Caco-2 (cell line): ENCODE measurements at regions of chr20 and their contacts with region 1.

Region 1: DNA sequence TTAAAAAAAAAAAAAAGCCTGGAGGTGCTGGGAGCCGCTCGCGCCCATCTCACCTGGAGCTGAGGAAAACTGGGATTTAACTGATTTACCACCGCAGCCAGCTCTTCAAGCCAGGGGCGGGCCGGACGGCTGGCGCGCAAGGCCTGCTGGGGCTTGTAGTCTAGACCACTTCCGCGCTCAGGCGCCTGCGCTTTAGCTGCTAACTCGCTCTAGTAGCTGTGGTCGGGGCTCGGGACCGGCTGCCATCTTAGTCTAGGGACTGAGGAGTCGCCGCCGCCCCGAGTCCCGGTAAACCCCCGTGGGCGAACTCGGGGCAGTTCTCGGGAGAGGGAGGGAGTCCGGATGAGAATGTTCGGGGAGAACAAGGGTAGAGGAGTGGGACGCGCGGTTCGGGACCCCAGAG is at the start of gene ITCH:
- DNase-seq: peak; percentile 99
- H3K4me3 ChIP-seq: peak within 1 kb of the TSS; percentile 93
- H3K4me3 Mint-ChIP-seq: peak within 1 kb of the TSS; percentile 81
- H3K27ac Mint-ChIP-seq: peak within 1 kb of the TSS; percentile 96
- H3K4me1 ChIP-seq: peaks cover 26% of the 10 kb centered on the region
- H3K4me1 Mint-ChIP-seq: peaks cover 23% of the 10 kb centered on the region
- H3K27me3 ChIP-seq: no peaks in the 10 kb centered on the region
- H3K27me3 Mint-ChIP-seq: no peaks in the 10 kb centered on the region
- CTCF ChIP-seq: no peak
- total RNA-seq, gene ITCH: 135 and 138 TPM in 2 replicates

Region 2: GRCh38 chr20:34282041-34282440 is 81.0 kb before region 1 on chr20:
- CTCF ChIA-PET with region 1: no interaction called
- POLR2A ChIA-PET with region 1: interaction called, 15 read pairs
- intact Hi-C with region 1: no loop called
- DNase-seq: no peak
- H3K4me3 ChIP-seq: no peak overlapping the region
- H3K4me3 Mint-ChIP-seq: no peak overlapping the region
- H3K27ac Mint-ChIP-seq: no peak overlapping the region
- H3K4me1 ChIP-seq: no peaks in the 10 kb centered on the region
- H3K4me1 Mint-ChIP-seq: no peaks in the 10 kb centered on the region
- H3K27me3 ChIP-seq: no peaks in the 10 kb centered on the region
- H3K27me3 Mint-ChIP-seq: no peaks in the 10 kb centered on the region
- CTCF ChIP-seq: no peak

Region 3: GRCh38 chr20:34334654-34335407 is 28.2 kb before region 1 on chr20:
- CTCF ChIA-PET with region 1: no interaction called
- POLR2A ChIA-PET with region 1: interaction called, 15 read pairs
- intact Hi-C with region 1: no loop called
- DNase-seq: no peak
- H3K4me3 ChIP-seq: no peak overlapping the region
- H3K4me3 Mint-ChIP-seq: no peak overlapping the region
- H3K27ac Mint-ChIP-seq: peak overlapping the region; percentile 56
- H3K4me1 ChIP-seq: peaks cover 19% of the 10 kb centered on the region
- H3K4me1 Mint-ChIP-seq: peaks cover 25% of the 10 kb centered on the region
- H3K27me3 ChIP-seq: no peaks in the 10 kb centered on the region
- H3K27me3 Mint-ChIP-seq: no peaks in the 10 kb centered on the region
- CTCF ChIP-seq: no peak

Region 4: DNA sequence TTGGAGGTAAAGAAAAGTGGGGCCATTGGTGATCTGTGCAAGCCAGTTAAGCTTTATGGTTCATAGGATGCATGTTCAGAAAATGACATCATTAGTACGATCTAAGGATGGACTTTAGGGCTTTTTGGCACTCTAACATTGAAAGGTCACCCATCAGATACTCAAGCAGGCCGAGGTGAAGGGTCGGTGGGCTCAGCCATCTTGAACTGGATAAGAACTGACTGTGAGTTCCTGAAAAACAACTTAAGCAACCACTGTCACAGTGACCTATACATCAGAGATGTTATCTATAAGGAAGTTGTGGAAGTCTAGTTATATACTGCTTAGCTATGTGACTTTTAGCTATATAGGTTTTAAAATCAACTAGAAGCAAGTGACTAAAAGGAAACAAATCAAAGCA is 13.0 kb before region 1 on chr20:
- CTCF ChIA-PET with region 1: interaction called, 11 read pairs
- POLR2A ChIA-PET with region 1: interaction called, 10 read pairs
- intact Hi-C with region 1: no loop called
- DNase-seq: no peak
- H3K4me3 ChIP-seq: no peak overlapping the region
- H3K4me3 Mint-ChIP-seq: no peak overlapping the region
- H3K27ac Mint-ChIP-seq: no peak overlapping the region
- H3K4me1 ChIP-seq: peaks cover 19% of the 10 kb centered on the region
- H3K4me1 Mint-ChIP-seq: peaks cover 11% of the 10 kb centered on the region
- H3K27me3 ChIP-seq: no peaks in the 10 kb centered on the region
- H3K27me3 Mint-ChIP-seq: no peaks in the 10 kb centered on the region
- CTCF ChIP-seq: no peak

Region 5: DNA sequence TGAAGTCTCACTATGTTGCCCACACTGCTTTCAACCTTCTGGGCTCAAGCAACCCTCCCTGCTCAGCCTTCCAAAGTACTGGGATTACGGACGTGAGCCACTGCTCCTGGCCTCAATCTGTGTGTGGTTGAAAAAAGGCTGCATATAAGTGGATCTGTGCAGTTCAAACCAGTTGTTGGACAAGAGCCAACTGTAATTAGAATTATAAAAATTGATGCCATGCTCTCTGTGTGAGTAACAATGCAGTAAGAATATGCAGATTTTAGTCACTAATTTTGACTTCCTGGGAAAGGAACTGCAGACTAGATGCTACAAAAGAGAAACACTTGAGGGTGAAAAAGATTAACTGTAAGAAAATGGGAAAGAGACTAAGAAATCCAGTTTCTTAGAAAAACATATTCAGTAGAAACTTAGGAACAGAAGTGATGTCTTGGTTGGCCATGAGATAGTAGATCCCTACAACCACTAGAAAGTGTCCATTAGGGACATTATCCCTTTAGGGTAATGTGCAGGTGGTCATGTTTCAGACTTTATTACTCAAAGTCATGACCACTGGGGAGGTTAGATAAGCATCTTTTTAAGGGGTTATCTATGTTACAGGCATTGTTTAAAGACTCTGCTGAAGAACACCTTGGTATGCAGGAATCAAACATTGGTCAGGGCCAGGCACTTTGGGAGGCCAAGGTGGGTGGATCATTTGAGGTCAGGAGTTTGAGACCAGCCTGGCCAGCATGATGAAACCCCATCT is 26.3 kb after region 1 on chr20:
- CTCF ChIA-PET with region 1: no interaction called
- POLR2A ChIA-PET with region 1: interaction called, 24 read pairs
- intact Hi-C with region 1: no loop called
- DNase-seq: peak; percentile 36 to 67
- H3K4me3 ChIP-seq: no peak overlapping the region
- H3K4me3 Mint-ChIP-seq: no peak overlapping the region
- H3K27ac Mint-ChIP-seq: peak overlapping the region; percentile 43
- H3K4me1 ChIP-seq: peaks cover 49% of the 10 kb centered on the region
- H3K4me1 Mint-ChIP-seq: peaks cover 47% of the 10 kb centered on the region
- H3K27me3 ChIP-seq: no peaks in the 10 kb centered on the region
- H3K27me3 Mint-ChIP-seq: no peaks in the 10 kb centered on the region
- CTCF ChIP-seq: no peak

Region 6: GRCh38 chr20:34522969-34523871 is 160.2 kb after region 1 on chr20:
- CTCF ChIA-PET with region 1: interaction called, 17 read pairs
- POLR2A ChIA-PET with region 1: interaction called, 4 read pairs
- intact Hi-C with region 1: no loop called
- DNase-seq: peak; percentile 89 to 93
- H3K4me3 ChIP-seq: no peak overlapping the region
- H3K4me3 Mint-ChIP-seq: no peak overlapping the region
- H3K27ac Mint-ChIP-seq: peak overlapping the region; percentile 25
- H3K4me1 ChIP-seq: peaks cover 46% of the 10 kb centered on the region
- H3K4me1 Mint-ChIP-seq: peaks cover 50% of the 10 kb centered on the region
- H3K27me3 ChIP-seq: no peaks in the 10 kb centered on the region
- H3K27me3 Mint-ChIP-seq: no peaks in the 10 kb centered on the region
- CTCF ChIP-seq: peak; percentile 96 to 99

Region 7: DNA sequence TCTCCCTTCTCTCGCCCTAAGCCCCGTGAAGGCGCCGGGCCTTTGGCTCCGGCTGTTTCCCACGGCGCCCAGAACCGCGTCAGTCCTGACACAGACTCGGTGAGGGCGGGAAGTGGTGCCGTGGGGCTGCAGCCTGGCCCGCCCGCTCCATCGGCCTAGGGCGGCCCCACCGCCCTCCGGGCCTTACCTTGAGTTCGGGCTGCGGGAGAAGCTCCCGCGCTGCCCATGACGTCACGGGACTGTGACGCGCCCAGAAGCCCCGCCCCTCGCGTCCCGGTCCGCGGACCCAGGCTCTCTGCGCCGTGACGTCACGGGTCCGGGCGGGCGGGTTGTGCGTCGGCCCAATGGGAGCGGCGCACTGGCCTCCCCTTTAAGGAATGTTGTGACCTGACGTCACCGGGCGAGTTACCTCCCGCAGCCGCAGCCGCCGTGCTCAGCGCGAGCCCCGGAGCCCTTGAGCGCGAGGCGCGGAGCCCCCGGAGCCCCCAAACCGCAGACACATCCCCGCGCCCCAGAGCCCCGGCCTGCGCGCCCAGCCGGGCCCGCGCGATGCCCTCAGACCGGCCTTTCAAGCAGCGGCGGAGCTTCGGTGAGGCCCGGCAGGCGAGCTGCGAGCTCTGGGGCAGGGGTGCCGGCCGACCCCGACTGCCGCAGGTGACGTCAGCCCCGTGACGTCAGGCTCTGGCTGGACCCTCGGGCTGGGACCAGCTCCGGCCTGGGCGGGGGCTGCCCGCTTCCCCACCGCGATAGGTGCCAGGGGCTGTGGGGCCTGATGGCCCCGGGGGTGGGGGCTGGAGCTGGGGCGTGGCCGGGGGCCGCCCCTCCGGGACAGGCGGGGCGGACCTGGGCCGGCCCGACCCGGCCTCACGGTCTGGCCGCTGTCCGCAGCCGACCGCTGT is 195.5 kb after region 1 on chr20 and contains the start of gene MAP1LC3A:
- CTCF ChIA-PET with region 1: no interaction called
- POLR2A ChIA-PET with region 1: no interaction called
- intact Hi-C with region 1: no loop called
- DNase-seq: no peak
- H3K4me3 ChIP-seq: no peak within 1 kb of the TSS
- H3K4me3 Mint-ChIP-seq: no peak within 1 kb of the TSS
- H3K27ac Mint-ChIP-seq: no peak within 1 kb of the TSS
- H3K4me1 ChIP-seq: no peaks in the 10 kb centered on the region
- H3K4me1 Mint-ChIP-seq: no peaks in the 10 kb centered on the region
- H3K27me3 ChIP-seq: no peaks in the 10 kb centered on the region
- H3K27me3 Mint-ChIP-seq: no peaks in the 10 kb centered on the region
- CTCF ChIP-seq: no peak
- total RNA-seq, gene MAP1LC3A: 0.88 and 0.95 TPM in 2 replicates

Region 8: GRCh38 chr20:34629342-34629741 is 266.3 kb after region 1 on chr20:
- CTCF ChIA-PET with region 1: no interaction called
- POLR2A ChIA-PET with region 1: no interaction called
- intact Hi-C with region 1: no loop called
- DNase-seq: no peak
- H3K4me3 ChIP-seq: no peak overlapping the region
- H3K4me3 Mint-ChIP-seq: no peak overlapping the region
- H3K27ac Mint-ChIP-seq: no peak overlapping the region
- H3K4me1 ChIP-seq: peaks cover 25% of the 10 kb centered on the region
- H3K4me1 Mint-ChIP-seq: peaks cover 23% of the 10 kb centered on the region
- H3K27me3 ChIP-seq: no peaks in the 10 kb centered on the region
- H3K27me3 Mint-ChIP-seq: no peaks in the 10 kb centered on the region
- CTCF ChIP-seq: no peak